Thyroid gland (tissue), 4 donors: ENCODE measurements at regions of chr1 and their contacts with region 1.

Region 1: GRCh38 chr1:14113841-14114567 is 414.0 kb downstream of the PRDM2 start:
- DNase-seq: peak; percentile 73 to 81
- H3K4me3 ChIP-seq: no peak overlapping the region
- H3K27ac ChIP-seq: no peak overlapping the region
- H3K4me1 ChIP-seq: no peaks in the 10 kb centered on the region
- H3K27me3 ChIP-seq: no peaks in the 10 kb centered on the region
- CTCF ChIP-seq: peak; percentile 38 to 85 (median 75)
- POLR2A ChIP-seq: no peak

Region 2: DNA sequence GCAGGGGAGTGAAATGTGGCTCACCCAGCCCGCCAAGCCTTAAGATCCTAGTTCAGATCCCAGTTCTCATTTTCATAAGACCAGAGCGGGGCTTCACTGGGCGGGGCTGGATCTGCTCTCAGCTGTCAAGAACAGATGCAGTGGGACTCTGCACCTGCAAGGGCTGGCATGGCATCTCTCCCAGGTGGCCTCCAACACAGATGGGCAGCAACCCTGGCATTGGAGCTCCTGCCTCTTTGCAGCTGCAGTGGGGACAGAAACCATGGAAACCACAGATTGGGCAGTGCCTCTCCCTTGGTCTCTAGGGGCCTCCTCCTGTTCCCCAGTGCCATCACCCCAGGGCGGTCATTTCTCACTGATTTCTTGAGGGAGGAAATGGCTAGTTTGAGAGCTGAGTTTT is 146.3 kb before region 1 on chr1:
- intact Hi-C with region 1: no loop called
- DNase-seq: no peak
- H3K4me3 ChIP-seq: no peak overlapping the region
- H3K27ac ChIP-seq: no peak overlapping the region
- H3K4me1 ChIP-seq: no peaks in the 10 kb centered on the region
- H3K27me3 ChIP-seq: no peaks in the 10 kb centered on the region
- CTCF ChIP-seq: no peak
- POLR2A ChIP-seq: no peak

Region 3: DNA sequence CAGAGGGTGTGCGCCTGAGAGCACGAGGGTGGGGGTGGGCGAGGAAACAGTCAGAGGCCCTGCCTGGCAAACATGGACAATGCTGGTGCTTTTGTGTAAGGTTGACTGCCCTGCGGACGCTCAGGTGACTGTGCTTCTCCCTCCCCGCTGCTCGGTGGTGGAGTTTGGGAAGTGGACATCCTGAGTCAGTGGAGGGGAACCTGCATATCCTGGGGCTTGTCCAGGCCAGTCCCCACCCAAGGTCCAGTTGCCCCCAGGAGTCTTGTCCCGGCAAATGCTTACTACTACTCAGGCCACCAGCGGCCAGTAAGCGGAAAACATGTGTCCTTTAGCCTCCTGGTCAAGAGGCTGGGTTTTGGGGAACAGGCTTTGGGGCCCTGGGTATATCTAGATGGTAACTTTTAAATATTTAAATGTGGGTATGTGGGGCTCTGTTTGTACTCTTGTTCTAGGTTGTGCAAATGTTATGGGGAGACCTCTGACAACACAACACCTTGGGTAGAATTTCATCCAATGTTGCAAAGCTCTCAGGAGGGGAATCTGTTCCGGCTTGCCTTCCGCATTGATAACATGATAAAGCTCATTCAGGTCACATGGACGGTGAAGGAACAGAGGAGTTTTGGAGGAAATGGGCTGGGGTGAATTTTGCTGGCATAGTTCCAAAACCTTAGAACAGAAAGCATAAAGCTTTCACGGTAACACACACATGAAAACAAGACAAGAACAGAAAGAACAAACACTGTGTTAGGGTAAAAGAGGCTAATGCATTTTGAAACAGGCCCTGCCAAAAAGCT is 49.2 kb before region 1 on chr1:
- intact Hi-C with region 1: no loop called
- DNase-seq: peak in 1 of 2 donors; percentile 4
- H3K4me3 ChIP-seq: no peak overlapping the region
- H3K27ac ChIP-seq: no peak overlapping the region
- H3K4me1 ChIP-seq: no peaks in the 10 kb centered on the region
- H3K27me3 ChIP-seq: no peaks in the 10 kb centered on the region
- CTCF ChIP-seq: no peak
- POLR2A ChIP-seq: no peak

Region 4: GRCh38 chr1:14452551-14452950 is 338.5 kb after region 1 on chr1:
- intact Hi-C with region 1: no loop called
- DNase-seq: no peak
- H3K4me3 ChIP-seq: no peak overlapping the region
- H3K27ac ChIP-seq: no peak overlapping the region
- H3K4me1 ChIP-seq: no peaks in the 10 kb centered on the region
- H3K27me3 ChIP-seq: no peaks in the 10 kb centered on the region
- CTCF ChIP-seq: no peak
- POLR2A ChIP-seq: no peak

Region 5: DNA sequence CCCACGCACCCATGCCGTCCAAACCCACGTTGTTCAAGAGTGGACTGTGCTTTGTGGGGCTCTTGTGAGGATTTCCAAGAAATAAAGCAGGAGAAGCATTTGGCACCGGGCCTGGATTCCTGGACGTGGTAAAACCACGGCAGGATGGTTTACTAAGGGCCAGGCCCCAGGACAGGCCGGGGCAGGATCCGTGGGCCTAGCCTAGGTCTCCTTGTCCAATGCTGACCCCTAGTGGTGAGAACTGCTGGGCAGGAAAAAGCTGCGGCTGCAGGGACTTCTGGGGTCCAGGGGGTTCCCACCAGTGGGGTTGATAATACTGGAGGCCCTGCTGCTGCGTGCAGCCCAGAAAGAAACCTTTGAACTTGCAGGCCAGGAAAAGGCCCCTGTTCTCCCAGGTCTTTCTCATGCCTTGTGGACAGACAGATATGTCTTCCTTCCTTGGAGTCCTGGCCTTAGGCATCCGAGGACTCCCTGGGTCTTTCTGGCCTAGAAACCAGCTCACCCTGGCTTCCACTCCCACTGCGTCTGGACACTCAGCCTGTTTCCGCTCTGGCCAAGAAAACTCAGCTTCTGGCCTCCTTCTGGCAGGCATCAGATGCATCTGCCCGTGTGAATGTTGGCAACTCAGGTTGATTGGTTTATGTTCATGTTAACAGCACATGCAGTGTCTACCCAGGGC is 932.6 kb after region 1 on chr1:
- intact Hi-C with region 1: loop called (anchors 5 kb)
- DNase-seq: peak; percentile 97 to 99
- H3K4me3 ChIP-seq: no peak overlapping the region
- H3K27ac ChIP-seq: no peak overlapping the region
- H3K4me1 ChIP-seq: peaks cover 3 to 7% of the 10 kb centered on the region in 2 donors
- H3K27me3 ChIP-seq: no peaks in the 10 kb centered on the region
- CTCF ChIP-seq: peak; percentile 92 to 98 (median 94)
- POLR2A ChIP-seq: no peak

Region 6: GRCh38 chr1:15100121-15100874 is 986.3 kb after region 1 on chr1:
- intact Hi-C with region 1: loop called (anchors 5 kb)
- DNase-seq: peak; percentile 54 to 58
- H3K4me3 ChIP-seq: no peak overlapping the region
- H3K27ac ChIP-seq: no peak overlapping the region
- H3K4me1 ChIP-seq: no peaks in the 10 kb centered on the region
- H3K27me3 ChIP-seq: no peaks in the 10 kb centered on the region
- CTCF ChIP-seq: peak; percentile 79 to 95 (median 88)
- POLR2A ChIP-seq: no peak